BJ (cell line): ENCODE measurements at regions of chr4 and their contacts with region 1.

Region 1: DNA sequence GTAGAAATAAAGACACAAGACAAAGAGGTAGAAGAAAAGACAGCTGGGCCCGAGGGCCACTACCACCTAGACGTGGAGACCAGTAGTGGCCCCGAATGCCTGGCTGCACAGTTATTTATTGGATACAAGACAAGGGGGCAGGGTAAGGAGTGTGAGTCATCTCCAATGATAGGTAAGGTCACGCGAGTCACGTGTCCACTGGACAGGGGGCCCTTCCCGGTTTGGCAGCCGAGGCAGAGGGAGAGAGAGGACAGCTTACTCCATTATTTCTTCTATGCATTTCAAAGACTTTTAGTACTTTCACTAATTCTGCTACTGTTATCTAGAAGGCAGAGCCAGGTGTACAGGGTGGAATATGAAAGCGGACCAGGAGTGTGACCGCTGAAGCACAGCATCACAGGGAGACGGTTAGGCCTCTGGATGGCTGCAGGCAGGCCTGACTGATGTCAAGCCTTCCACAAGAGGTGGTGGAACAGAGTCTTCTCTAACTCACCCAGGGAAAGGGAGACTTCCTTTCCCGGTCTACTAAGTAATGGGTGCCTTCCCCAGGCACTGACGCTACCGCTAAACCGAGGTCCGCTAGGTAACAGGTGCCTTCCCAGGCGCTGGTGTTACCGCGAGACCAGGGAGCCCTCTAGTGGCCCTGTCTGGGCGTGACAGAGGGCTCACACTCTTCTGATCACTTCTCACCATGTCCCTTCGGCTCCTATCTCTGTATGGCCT is 44.9 kb downstream of the ZBTB49 start:
- DNase-seq: no peak
- H3K4me3 ChIP-seq: no peak overlapping the region
- H3K27me3 ChIP-seq: peaks cover 13% of the 10 kb centered on the region
- CTCF ChIP-seq: peak; percentile 89

Region 2: DNA sequence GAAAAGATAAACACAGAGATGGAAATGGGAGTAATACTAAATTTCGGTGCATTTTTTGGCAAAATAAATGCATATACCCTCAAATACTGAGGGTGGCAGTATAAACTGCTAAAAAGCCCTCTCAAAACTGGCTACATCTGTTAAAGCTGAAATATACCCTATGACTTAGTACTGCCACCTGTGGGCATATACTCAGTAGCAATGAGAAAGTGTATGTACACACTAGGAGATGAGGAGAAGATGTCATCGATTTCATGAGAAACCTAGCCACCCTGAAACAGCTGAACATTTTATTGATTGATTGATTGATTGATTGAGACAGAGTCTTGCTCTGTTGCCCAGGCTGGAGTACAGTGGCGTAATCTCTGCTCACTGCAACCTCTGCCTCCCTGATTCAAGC is 74.7 kb before region 1 on chr4:
- CTCF ChIA-PET with region 1: interaction called, 19 read pairs
- POLR2A ChIA-PET with region 1: no interaction called
- DNase-seq: no peak
- H3K4me3 ChIP-seq: no peak overlapping the region
- H3K27me3 ChIP-seq: peaks cover 4% of the 10 kb centered on the region
- CTCF ChIP-seq: peak; percentile 50